ENCODE measurements at regions of chr22 and their contacts with region 1.

Region 1: DNA sequence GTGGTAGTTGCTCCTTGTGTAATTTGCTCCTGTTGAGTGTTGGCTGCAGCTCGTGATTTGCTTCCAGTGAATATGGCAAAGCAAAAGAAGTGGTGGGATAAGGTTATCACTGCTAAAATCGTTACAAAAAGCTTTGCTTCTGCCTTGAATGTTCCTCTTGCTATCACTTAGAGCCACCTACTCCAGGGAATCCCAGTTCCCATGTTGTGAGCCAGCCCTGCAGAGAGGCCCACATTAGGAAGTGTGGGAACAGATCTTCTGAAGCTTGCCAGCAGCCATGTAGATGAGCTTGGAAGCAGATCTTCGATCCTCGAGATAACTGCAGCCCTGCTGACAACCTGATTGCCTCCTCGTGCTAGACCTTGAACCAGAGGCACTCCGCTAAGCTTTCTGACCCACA is 71.0 kb downstream of the SPECC1L start:
- DNase-seq: no peak
- ATAC-seq: no peak

Region 2: GRCh38 chr22:24379536-24379935 is 37.9 kb after region 1 on chr22:
- intact Hi-C with region 1: no loop called
- DNase-seq: no peak
- ATAC-seq: no peak

Region 3: DNA sequence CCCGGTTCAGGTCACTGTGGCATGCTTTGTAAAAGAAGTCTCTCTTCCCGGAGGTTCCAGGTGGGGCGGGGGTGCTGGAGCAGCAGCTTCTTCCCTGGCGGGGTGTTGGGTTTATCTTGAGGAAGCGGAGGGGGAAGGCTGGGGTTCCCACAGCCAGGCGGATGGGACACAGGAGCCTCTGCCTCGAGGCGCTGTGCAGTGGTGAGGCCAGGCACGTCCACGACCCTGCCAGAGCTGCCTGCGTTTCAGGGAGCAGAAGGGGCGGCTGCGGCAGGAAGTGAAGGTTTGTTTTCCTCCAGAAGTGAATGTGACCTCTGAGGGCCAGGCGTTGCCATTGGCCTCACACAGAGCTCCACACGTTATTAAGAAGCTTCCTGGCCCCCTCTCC is 65.6 kb after region 1 on chr22:
- intact Hi-C with region 1: loop called (anchors 5 kb)
- DNase-seq: no peak
- ATAC-seq: no peak